HepG2 (cell line): ENCODE measurements at regions of chr11 and their contacts with region 1.

Region 1: DNA sequence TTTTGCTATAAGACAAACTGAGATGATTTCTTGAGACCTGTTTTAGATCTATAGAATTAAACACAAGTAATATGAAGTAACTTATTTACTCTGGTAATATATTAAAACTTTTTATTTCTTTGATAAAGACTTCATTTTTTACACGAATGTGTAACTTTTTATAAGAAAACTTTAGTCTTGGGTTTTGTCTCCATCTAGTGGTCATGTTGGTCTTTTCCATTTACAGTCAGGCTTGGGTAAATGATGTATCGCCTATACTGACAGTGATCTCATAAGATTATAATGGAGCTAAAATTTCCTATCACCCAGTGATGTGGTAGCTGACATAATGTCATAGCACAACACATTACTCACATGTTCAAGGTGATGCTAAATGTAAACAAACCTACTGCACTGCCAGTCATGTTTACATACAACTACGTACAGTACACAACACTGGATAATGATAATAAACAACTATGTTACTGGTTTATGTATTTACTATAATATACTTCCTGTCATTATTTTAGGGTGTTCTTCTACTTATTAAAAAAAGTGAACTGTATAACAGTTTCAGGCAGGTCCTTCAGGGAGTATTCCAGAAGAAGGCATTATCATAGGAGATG is 7.5 kb upstream of the C11orf97 start:
- DNase-seq: peak; percentile 43
- ATAC-seq: peak; percentile 67
- H3K4me3 ChIP-seq: no peak overlapping the region
- H3K27ac ChIP-seq: no peak overlapping the region
- H3K4me1 ChIP-seq: peaks cover 12% of the 10 kb centered on the region
- H3K27me3 ChIP-seq: no peaks in the 10 kb centered on the region
- CTCF ChIP-seq: peak; percentile 63
- EP300 ChIP-seq: no peak
- POLR2A ChIP-seq: no peak
- RAD21 ChIP-seq: no peak

Region 2: GRCh38 chr11:93895106-93895862 is 609.5 kb before region 1 on chr11:
- CTCF ChIA-PET with region 1: interaction called, 3 read pairs
- POLR2A ChIA-PET with region 1: no interaction called
- in situ Hi-C with region 1: no loop called
- intact Hi-C with region 1: loop called (anchors 2 kb)
- DNase-seq: peak; percentile 37
- ATAC-seq: peak; percentile 78
- H3K4me3 ChIP-seq: no peak overlapping the region
- H3K27ac ChIP-seq: no peak overlapping the region
- H3K4me1 ChIP-seq: no peaks in the 10 kb centered on the region
- H3K27me3 ChIP-seq: peaks cover 0 to 5% of the 10 kb centered on the region in 2 experiments; a peak in 1 of 5 replicates
- CTCF ChIP-seq: peak; percentile 73
- EP300 ChIP-seq: no peak
- POLR2A ChIP-seq: no peak
- RAD21 ChIP-seq: 0 out of 2 replicates have a peak, but pooled peaks have one; percentile 35

Region 3: GRCh38 chr11:93921695-93922468 is 582.9 kb before region 1 on chr11:
- CTCF ChIA-PET with region 1: no interaction called
- POLR2A ChIA-PET with region 1: no interaction called
- in situ Hi-C with region 1: loop called (anchors 10 kb)
- intact Hi-C with region 1: loop called (anchors 1 kb)
- DNase-seq: peak; percentile 56
- ATAC-seq: peak; percentile 85
- H3K4me3 ChIP-seq: no peak overlapping the region
- H3K27ac ChIP-seq: no peak overlapping the region
- H3K4me1 ChIP-seq: peaks cover 19% of the 10 kb centered on the region
- H3K27me3 ChIP-seq: no peaks in the 10 kb centered on the region
- CTCF ChIP-seq: peak; percentile 87
- EP300 ChIP-seq: no peak
- POLR2A ChIP-seq: no peak
- RAD21 ChIP-seq: peak; percentile 76

Region 4: DNA sequence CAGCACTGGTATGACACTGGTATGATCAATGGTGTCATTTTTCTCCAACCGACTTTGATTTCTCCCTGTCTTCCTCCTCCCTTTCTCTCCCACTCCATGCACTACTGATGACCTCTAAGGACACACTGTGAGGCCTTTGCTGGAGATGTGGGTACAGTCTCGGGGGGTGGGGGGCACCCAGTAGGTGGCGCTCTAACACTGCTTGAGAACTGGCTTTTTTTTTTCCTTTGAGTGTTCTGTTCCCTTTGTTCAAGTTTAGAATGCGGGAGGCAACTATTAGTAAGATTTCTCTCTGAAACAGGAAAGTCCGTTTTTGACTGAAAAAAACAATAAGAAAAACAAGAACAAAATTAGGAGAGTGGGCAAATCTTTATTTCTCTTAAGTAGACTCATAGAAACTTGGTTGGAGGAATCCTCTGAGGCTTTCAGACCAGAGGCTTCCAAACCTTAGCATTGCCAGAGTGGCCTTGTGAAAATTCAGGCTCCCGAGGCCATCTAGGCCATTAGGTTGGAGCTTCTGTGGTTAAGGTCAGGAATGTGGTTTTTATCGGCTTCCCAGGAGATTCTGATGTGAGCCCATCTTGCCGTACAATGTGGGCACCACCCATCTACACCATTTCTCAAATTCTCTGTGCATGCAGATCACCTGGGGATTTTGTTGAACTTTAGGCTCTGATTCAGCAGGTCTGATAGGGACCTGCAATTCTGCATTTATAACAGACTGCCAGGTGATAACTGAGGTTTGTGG is 332.9 kb before region 1 on chr11:
- CTCF ChIA-PET with region 1: no interaction called
- POLR2A ChIA-PET with region 1: no interaction called
- in situ Hi-C with region 1: loop called (anchors 10 kb)
- intact Hi-C with region 1: loop called (anchors 5 kb)
- DNase-seq: peak; percentile 31
- ATAC-seq: peak; percentile 96
- H3K4me3 ChIP-seq: no peak overlapping the region
- H3K27ac ChIP-seq: no peak overlapping the region
- H3K4me1 ChIP-seq: no peaks in the 10 kb centered on the region
- H3K27me3 ChIP-seq: no peaks in the 10 kb centered on the region
- CTCF ChIP-seq: peak; percentile 78
- EP300 ChIP-seq: no peak
- POLR2A ChIP-seq: no peak
- RAD21 ChIP-seq: no peak

Region 5: DNA sequence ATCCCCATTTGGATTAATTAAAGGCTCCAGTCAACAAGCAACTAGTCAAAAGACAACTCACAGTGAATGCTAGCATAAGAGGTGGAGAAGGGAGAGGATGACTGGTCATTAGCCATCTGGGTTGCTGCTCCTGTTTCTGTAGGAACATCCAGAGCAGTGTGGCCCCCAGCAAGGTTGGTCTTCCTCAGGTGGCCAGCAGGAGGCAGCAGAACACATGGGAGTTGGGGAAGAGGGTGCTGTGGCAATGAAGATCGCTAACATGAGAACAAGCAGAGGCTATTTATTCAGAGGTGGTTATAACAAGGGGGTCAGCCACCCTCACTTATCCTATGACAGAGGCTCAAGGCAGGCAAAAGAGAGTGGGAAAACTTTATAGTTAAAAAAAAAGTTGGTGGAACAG is 179.1 kb before region 1 on chr11:
- CTCF ChIA-PET with region 1: interaction called, 16 read pairs
- POLR2A ChIA-PET with region 1: no interaction called
- in situ Hi-C with region 1: loop called (anchors 5 kb)
- intact Hi-C with region 1: loop called (anchors 1 kb)
- DNase-seq: peak; percentile 39
- ATAC-seq: peak; percentile 95
- H3K4me3 ChIP-seq: no peak overlapping the region
- H3K27ac ChIP-seq: no peak overlapping the region
- H3K4me1 ChIP-seq: no peaks in the 10 kb centered on the region
- H3K27me3 ChIP-seq: no peaks in the 10 kb centered on the region; a peak in 1 of 5 replicates
- CTCF ChIP-seq: peak; percentile 84
- EP300 ChIP-seq: no peak
- POLR2A ChIP-seq: no peak
- RAD21 ChIP-seq: peak; percentile 71